A673 (cell line): ENCODE measurements at regions of chr2 and their contacts with region 1.

Region 1: GRCh38 chr2:216740557-216741222 is 45.3 kb upstream of the IGFBP5 start:
- DNase-seq: no peak
- H3K4me3 ChIP-seq: no peak overlapping the region
- H3K27ac ChIP-seq: no peak overlapping the region
- H3K4me1 ChIP-seq: no peaks in the 10 kb centered on the region
- H3K27me3 ChIP-seq: peaks cover 7% of the 10 kb centered on the region
- CTCF ChIP-seq: no peak

Region 2: GRCh38 chr2:216436383-216436782 is 304.3 kb before region 1 on chr2:
- CTCF ChIA-PET with region 1: no interaction called
- POLR2A ChIA-PET with region 1: no interaction called
- intact Hi-C with region 1: no loop called
- DNase-seq: no peak
- H3K4me3 ChIP-seq: no peak overlapping the region
- H3K27ac ChIP-seq: no peak overlapping the region
- H3K4me1 ChIP-seq: no peaks in the 10 kb centered on the region
- H3K27me3 ChIP-seq: no peaks in the 10 kb centered on the region
- CTCF ChIP-seq: no peak

Region 3: GRCh38 chr2:216666461-216667233 is 74.0 kb before region 1 on chr2:
- CTCF ChIA-PET with region 1: interaction called, 10 read pairs
- POLR2A ChIA-PET with region 1: no interaction called
- intact Hi-C with region 1: no loop called
- DNase-seq: peak; percentile 82
- H3K4me3 ChIP-seq: no peak overlapping the region
- H3K27ac ChIP-seq: no peak overlapping the region
- H3K4me1 ChIP-seq: peaks cover 12% of the 10 kb centered on the region
- H3K27me3 ChIP-seq: no peaks in the 10 kb centered on the region
- CTCF ChIP-seq: peak; percentile 99